ENCODE measurements at regions of chr9 and their contacts with region 1.

Region 1: DNA sequence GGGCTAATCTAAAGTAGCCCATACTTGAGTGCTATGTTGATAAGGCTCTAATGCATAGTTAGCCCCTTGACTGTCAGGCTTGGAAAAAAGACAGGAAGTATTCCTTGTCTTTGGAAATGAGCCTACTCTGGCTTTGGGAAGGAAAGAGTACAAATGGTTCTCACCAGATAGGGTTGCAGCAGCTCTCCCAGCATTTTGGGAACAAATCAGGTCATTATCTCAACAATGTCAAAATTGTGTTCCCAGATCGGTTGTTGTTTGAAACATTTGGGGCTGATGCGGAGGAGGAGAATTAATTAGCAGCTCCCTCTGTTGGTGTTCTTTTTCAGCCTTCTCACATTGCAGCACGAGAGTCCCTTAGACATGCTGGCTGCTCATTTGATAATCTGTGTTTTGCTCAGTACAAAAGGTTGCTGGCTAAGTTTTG is 294.7 kb upstream of the DMRT1 start:
- DNase-seq: no peak
- ATAC-seq: peak; percentile 69 to 76 (median 71)
- H3K4me3 ChIP-seq: peak overlapping the region in 9 of 12 donors; percentile 10 to 35 (median 25)
- H3K27ac ChIP-seq: peak overlapping the region; percentile 50 to 84 (median 70)
- H3K4me1 ChIP-seq: peaks cover 5 to 50% (median 24%) of the 10 kb centered on the region in 12 donors
- H3K27me3 ChIP-seq: no peaks in the 10 kb centered on the region
- CTCF ChIP-seq: peak; percentile 6 to 59 (median 40)
- POLR2A ChIP-seq: no peak

Region 2: DNA sequence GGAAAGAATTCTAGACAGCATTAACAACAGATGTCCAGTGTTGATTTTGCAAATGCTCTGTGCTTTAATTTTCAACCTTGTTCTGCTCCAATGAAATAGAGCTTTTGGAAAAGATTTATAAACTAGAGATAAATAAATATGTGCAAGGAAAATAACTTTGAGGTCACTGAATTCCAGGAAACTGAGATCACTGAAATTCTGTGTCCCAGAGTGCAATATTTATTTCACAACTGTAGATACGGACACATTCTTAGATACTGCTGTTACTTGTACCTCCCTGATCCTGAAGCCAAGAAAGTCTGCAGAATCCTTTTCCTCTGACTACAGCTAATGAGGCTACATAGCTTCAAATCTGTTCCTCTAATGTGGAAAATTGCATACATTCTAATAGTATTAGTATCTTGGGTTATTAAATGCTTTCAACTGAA is 109.2 kb before region 1 on chr9:
- intact Hi-C with region 1: loop called in 1 of 10 experiments (anchors 10 kb)
- DNase-seq: no peak
- ATAC-seq: peak; percentile 63 to 87 (median 80)
- H3K4me3 ChIP-seq: no peak overlapping the region
- H3K27ac ChIP-seq: peak overlapping the region in 10 of 12 donors; percentile 27 to 70 (median 56)
- H3K4me1 ChIP-seq: peaks cover 0 to 20% (median 4%) of the 10 kb centered on the region in 12 donors
- H3K27me3 ChIP-seq: no peaks in the 10 kb centered on the region
- CTCF ChIP-seq: no peak
- POLR2A ChIP-seq: no peak

Region 3: DNA sequence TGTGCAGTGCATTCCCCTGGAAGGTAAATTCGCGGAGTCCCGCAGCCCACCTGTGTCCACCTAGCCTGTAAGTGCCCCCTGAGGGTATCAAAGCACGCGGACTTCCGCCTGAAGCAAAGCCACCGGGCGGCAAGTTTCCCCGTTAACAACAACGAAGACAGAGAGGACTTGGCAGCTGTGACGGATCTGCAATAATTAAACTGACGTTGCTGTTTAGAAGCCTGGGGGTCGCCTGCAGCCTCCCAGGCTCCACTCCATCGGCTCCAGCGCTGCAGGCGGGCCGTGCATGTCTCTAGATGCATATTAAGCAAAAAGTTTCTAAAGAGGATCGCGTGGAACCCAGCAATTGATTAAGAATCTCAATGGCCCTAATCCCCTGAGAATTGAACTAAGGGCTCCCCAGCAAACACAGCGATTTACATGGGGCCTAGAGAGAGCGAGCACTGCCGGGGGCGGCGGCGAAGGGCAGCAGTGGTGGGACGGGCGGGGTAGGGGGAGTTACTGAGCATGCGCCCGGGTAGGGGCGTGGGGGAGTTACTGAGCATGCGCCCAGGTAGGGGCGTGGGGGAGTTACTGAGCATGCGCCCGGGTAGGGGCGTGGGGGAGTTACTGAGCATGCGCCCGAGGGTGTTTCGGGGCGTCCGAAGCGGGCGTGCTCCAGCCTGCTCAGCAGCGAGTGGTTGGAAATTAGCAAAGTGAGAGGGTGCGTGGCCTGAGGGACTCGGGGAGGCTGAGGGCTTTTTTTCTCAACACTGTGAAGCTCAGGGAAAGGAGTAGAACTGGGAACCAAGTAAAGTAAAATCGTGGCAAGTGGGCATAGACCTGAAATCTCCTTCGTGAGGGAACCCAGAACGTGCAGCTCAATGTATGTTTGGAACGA is 76.9 kb before region 1 on chr9:
- intact Hi-C with region 1: loop called in 2 of 10 experiments (anchors 5 to 10 kb)
- DNase-seq: peak; percentile 79 to 92 (median 91)
- ATAC-seq: peak; percentile 96 to 99 (median 98)
- H3K4me3 ChIP-seq: peak overlapping the region in 11 of 12 donors; percentile 43 to 76 (median 64)
- H3K27ac ChIP-seq: peak overlapping the region in 11 of 12 donors; percentile 75 to 91 (median 83)
- H3K4me1 ChIP-seq: peaks cover 0 to 30% (median 11%) of the 10 kb centered on the region in 12 donors
- H3K27me3 ChIP-seq: no peaks in the 10 kb centered on the region
- CTCF ChIP-seq: no peak
- POLR2A ChIP-seq: peak in 1 of 2 donors; percentile 70

Region 4: GRCh38 chr9:706606-707459 is 160.0 kb after region 1 on chr9:
- intact Hi-C with region 1: no loop called
- DNase-seq: peak; percentile 60 to 84 (median 70)
- ATAC-seq: peak; percentile 23 to 70 (median 66)
- H3K4me3 ChIP-seq: peak overlapping the region; percentile 20 to 68 (median 58)
- H3K27ac ChIP-seq: peak overlapping the region; percentile 42 to 85 (median 64)
- H3K4me1 ChIP-seq: peaks cover 4 to 57% (median 33%) of the 10 kb centered on the region in 12 donors
- H3K27me3 ChIP-seq: peaks cover 0 to 4% (median 0%) of the 10 kb centered on the region in 9 donors
- CTCF ChIP-seq: no peak
- POLR2A ChIP-seq: no peak